ENCODE measurements at regions of chr1 and their contacts with region 1.

Region 1: DNA sequence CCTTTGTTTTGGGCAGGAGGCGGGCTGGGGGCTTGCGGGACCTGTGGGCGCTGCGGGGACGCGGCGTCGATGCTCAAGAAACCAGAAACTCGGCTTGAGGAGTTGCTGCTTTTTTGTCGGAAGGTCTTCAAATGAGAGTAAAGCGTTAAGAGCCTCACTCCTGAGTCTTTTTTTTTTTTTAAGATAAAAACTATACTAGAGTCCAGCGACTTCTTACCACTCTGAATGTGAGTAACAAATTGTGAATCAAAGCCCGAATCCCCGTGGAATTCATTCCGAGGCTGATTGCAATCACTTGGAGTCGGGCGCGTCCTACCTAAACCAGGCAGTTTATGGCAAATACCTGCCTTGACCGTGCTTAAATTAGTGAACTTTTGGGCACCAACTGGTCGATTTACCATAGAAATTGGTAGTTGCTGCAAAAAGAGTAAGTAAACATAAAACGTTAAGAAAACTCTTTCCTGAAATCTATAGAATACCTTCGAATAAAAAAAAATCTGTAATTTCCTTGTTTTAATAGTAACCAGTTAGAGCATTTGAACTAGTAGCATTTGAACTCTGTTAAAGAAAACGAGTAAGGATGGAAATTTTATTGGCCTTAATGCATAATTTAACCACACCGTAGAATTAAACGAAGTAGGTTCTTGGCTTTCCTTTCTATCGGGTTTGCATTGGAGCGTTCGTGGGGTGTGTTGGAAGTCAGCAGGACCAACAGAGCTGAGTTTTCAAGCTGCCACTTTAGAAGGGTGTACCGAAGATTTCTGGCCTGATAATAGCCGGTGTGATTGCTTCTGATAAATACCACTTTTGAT is 769 bp downstream of the GPSM2 start:
- DNase-seq: no peak
- ATAC-seq: no peak
- H3K4me3 ChIP-seq: peak overlapping the region; percentile 57 to 95 (median 86)
- H3K27ac ChIP-seq: peak overlapping the region in 7 of 10 donors; percentile 32 to 83 (median 43)
- H3K4me1 ChIP-seq: peaks cover 0 to 35% (median 11%) of the 10 kb centered on the region in 9 donors
- H3K27me3 ChIP-seq: no peaks in the 10 kb centered on the region
- CTCF ChIP-seq: no peak

Region 2: GRCh38 chr1:108503076-108503740 is 374.3 kb before region 1 on chr1:
- intact Hi-C with region 1: no loop called
- DNase-seq: no peak
- ATAC-seq: no peak
- H3K4me3 ChIP-seq: no peak overlapping the region
- H3K27ac ChIP-seq: no peak overlapping the region
- H3K4me1 ChIP-seq: peaks cover 0 to 15% (median 0%) of the 10 kb centered on the region in 9 donors
- H3K27me3 ChIP-seq: peaks cover 0 to 27% (median 0%) of the 10 kb centered on the region in 7 donors
- CTCF ChIP-seq: no peak

Region 3: GRCh38 chr1:108828022-108828961 is 49.3 kb before region 1 on chr1:
- intact Hi-C with region 1: loop called in 1 of 10 experiments (anchors 2 kb)
- DNase-seq: peak; percentile 73 to 82
- ATAC-seq: peak; percentile 57 to 80 (median 70)
- H3K4me3 ChIP-seq: no peak overlapping the region
- H3K27ac ChIP-seq: peak overlapping the region in 8 of 10 donors; percentile 32 to 54 (median 40)
- H3K4me1 ChIP-seq: peaks cover 0 to 39% (median 24%) of the 10 kb centered on the region in 9 donors
- H3K27me3 ChIP-seq: no peaks in the 10 kb centered on the region
- CTCF ChIP-seq: peak; percentile 59 to 90 (median 82)